ENCODE measurements at regions of chr6 and their contacts with region 1.

Region 1: GRCh38 chr6:81683928-81684327 is 68.6 kb downstream of the TENT5A start:
- DNase-seq: no peak
- ATAC-seq: no peak
- H3K4me3 ChIP-seq: no peak overlapping the region
- H3K27ac ChIP-seq: no peak overlapping the region
- H3K4me1 ChIP-seq: no peaks in the 10 kb centered on the region
- H3K27me3 ChIP-seq: no peaks in the 10 kb centered on the region

Region 2: DNA sequence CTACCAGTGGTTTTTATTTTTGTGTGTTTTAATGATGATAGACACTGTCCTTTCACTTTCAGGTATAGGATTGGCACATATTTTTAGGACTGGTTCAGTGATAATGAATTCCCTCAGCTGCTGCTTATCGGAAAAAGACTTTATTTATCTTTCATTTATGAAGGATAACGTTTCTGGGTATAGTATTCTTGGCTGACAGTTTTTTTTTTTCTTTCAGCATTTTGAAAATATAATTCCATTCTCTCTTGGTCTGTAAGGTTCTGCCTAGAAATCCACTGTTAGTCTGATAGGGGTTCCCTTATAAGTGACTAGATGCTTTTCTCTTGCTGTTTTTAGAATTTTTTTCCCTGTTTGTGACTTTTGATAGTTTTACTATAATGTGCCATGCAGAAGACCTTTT is 244.5 kb before region 1 on chr6:
- intact Hi-C with region 1: no loop called
- DNase-seq: no peak
- ATAC-seq: no peak
- H3K4me3 ChIP-seq: no peak overlapping the region
- H3K27ac ChIP-seq: no peak overlapping the region
- H3K4me1 ChIP-seq: no peaks in the 10 kb centered on the region
- H3K27me3 ChIP-seq: no peaks in the 10 kb centered on the region

Region 3: GRCh38 chr6:81636930-81637568 is 46.9 kb before region 1 on chr6:
- intact Hi-C with region 1: no loop called
- DNase-seq: no peak
- ATAC-seq: no peak
- H3K4me3 ChIP-seq: no peak overlapping the region
- H3K27ac ChIP-seq: no peak overlapping the region
- H3K4me1 ChIP-seq: no peaks in the 10 kb centered on the region
- H3K27me3 ChIP-seq: no peaks in the 10 kb centered on the region

Region 4: DNA sequence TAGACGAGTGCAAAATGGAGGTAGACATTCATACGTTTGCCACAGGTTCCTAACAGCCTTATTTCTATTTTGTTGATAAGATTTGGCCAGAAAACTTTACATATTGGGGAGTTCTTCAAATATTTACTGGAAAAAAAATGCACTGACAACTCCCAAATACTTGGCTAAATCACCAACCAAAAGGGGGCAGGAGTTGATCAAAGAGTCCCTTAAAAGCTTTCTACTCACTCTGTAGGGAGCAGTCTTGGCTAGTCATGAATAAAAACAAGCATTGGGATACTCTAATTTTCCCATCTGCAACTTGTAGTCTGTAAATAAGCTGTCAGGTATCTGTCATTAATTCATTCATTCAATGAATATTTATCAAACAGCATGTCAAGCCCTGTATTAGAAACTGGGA is 50.2 kb after region 1 on chr6:
- intact Hi-C with region 1: loop called in 1 of 4 experiments (anchors 10 kb)
- DNase-seq: no peak
- ATAC-seq: no peak
- H3K4me3 ChIP-seq: no peak overlapping the region
- H3K27ac ChIP-seq: no peak overlapping the region
- H3K4me1 ChIP-seq: peaks cover 3% of the 10 kb centered on the region
- H3K27me3 ChIP-seq: no peaks in the 10 kb centered on the region

Measured in right cardiac atrium (tissue), 5 donors.